ENCODE measurements at regions of chr10 and their contacts with region 1.

Region 1: DNA sequence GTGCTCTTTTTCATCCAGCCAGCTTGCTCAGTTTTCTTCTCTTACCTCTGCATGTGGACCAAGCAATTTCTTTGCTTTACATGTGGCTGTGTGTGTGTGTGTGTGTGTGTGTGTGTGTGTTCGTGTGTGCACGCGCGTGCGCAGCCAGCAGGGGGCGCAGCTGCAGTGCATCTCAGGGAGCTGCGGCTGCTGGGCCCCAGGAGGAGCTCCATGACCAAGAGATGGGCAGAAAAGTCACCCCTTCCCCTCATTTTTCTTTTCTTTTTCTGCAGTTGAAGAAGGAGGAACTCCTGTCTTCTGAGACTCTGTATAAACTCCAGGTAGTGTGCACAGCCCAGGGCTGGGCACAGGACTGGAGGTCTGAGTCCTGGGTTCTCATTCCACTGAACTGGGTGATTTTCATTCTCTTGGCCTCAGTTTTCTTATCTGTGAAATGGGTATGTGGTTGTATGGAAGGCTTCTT is 41.8 kb downstream of the BLNK start:
- DNase-seq: peak; percentile 61
- ATAC-seq: peak; percentile 89
- H3K4me3 ChIP-seq: no peak overlapping the region
- H3K27ac ChIP-seq: no peak overlapping the region
- H3K4me1 ChIP-seq: peaks cover 0 to 6% of the 10 kb centered on the region in 2 experiments; a peak in 1 of 4 replicates
- H3K27me3 ChIP-seq: no peaks in the 10 kb centered on the region
- CTCF ChIP-seq: peak; percentile 97 to 99 (median 98)
- POLR2A ChIP-seq: no peak
- RAD21 ChIP-seq: peak; percentile 90

Region 2: GRCh38 chr10:96038476-96039387 is 190.9 kb before region 1 on chr10:
- CTCF ChIA-PET with region 1: no interaction called
- POLR2A ChIA-PET with region 1: no interaction called
- RAD21 ChIA-PET with region 1: no interaction called
- intact Hi-C with region 1: no loop called
- DNase-seq: no peak
- ATAC-seq: no peak
- H3K4me3 ChIP-seq: no peak overlapping the region
- H3K27ac ChIP-seq: no peak overlapping the region
- H3K4me1 ChIP-seq: peaks cover 0 to 9% of the 10 kb centered on the region in 2 experiments; a peak in 3 of 4 replicates
- H3K27me3 ChIP-seq: no peaks in the 10 kb centered on the region
- CTCF ChIP-seq: no peak
- POLR2A ChIP-seq: no peak
- RAD21 ChIP-seq: no peak

Region 3: DNA sequence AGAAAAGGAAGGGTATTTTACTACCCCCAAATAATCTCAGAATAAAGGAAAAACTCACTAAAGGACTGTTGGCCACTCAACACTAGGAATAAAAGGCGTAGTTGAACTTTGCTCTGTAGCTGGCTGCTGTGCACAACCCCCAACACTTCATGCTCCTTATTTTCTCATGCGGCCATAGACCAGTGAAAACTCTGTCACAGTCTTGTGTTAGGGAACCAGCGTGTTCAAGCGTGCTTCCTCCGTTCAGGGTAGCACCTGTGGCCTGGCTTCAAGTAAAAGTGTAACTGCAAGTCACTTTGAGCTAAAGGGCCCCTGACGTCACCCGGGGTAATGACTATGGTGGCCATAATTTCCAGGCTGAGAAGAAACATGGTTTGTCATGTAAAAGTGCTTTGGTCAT is 14.8 kb after region 1 on chr10:
- CTCF ChIA-PET with region 1: interaction called, 18 read pairs
- POLR2A ChIA-PET with region 1: no interaction called
- RAD21 ChIA-PET with region 1: interaction called, 3 read pairs
- intact Hi-C with region 1: no loop called
- DNase-seq: no peak
- ATAC-seq: no peak
- H3K4me3 ChIP-seq: no peak overlapping the region
- H3K27ac ChIP-seq: no peak overlapping the region
- H3K4me1 ChIP-seq: no peaks in the 10 kb centered on the region
- H3K27me3 ChIP-seq: no peaks in the 10 kb centered on the region
- CTCF ChIP-seq: no peak
- POLR2A ChIP-seq: no peak
- RAD21 ChIP-seq: no peak

Region 4: DNA sequence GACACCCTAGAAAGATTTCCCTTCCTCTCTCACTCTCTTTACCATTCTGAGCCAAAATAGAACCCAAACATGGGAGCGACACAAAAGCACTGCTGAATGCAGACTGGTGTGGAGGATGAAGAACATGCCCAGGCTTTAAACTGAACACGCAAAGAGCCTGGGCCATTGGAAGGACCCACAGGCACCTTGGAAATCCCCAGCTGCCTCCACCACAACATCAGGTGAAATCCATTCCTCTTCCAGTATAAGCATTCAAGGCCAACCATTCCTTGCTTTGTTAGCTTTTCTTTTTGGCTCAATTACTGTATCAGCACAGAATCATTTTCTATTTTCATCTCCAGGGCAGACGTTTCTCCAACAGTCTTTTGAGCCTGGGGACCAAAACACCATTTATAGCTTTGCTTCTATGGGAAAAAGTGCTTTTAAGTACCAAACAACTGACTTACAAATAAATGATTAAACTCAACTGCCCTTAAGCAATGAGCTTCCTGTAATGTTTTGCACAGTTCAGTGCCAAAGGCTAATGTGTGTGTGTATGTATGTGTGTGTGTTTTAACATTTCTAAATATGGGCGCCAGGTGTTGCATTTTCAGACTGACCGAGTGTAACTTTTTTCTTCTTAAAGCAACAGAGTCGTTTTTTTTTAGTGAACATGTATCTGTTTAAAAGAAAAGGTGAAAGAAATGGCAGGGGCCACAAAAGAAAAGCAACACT is 58.0 kb after region 1 on chr10:
- CTCF ChIA-PET with region 1: interaction called, 70 read pairs
- POLR2A ChIA-PET with region 1: no interaction called
- RAD21 ChIA-PET with region 1: interaction called, 3 to 4 read pairs
- intact Hi-C with region 1: loop called (anchors 5 kb)
- DNase-seq: no peak
- ATAC-seq: peak; percentile 52; the same call in 1 of the 2 replicates
- H3K4me3 ChIP-seq: no peak overlapping the region
- H3K27ac ChIP-seq: no peak overlapping the region
- H3K4me1 ChIP-seq: peaks cover 4 to 9% of the 10 kb centered on the region in 2 experiments; a peak in 3 of 4 replicates
- H3K27me3 ChIP-seq: no peaks in the 10 kb centered on the region
- CTCF ChIP-seq: no peak
- POLR2A ChIP-seq: no peak
- RAD21 ChIP-seq: no peak

Region 5: DNA sequence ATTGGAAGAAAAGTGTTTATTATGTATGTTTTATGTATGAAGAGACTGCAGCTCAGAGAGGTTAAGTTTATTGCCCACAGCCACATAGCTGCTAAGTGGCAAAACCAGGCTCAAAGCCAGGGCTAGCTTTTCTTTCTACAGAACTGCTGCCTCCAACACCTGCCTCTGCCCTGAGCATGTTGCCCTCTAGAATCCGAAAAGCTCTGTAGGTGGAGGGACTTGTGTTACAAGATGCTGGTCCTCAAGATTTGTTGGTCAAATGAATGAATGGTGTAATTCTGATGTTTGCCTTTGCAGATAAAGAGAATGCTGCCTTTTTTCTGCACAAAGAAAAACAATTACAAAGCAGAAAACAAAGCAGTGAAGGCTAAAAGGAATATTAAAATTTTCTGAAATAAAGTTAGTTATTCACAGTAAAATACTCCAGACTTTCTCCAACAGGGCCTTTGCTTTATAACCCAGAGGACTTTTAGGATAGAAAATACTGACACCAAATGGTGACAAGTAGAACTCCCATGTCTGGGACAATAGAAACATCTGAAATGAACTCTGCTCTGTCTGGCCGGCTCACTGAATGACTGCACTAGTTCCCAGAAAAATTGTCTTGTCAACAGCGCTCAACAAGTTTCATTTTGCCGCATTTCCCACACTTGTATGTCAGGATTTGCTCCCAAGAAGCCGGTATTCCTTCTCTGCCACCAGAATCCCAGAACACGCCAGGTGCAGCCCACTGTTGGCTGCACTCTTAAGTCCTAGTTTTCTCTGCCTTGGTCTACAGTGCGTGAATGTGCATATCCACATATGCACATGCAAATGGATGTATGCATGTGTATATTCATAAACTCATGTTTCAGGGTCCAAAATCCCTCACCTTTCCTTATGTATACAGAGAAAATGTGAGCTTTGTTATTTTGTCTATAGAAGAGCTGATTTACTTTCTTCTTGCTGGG is 63.6 kb after region 1 on chr10:
- CTCF ChIA-PET with region 1: interaction called, 70 read pairs
- POLR2A ChIA-PET with region 1: no interaction called
- RAD21 ChIA-PET with region 1: interaction called in 1 of 2 experiments, 4 read pairs
- intact Hi-C with region 1: loop called (anchors 5 kb)
- DNase-seq: peak; percentile 47
- ATAC-seq: peak; percentile 95
- H3K4me3 ChIP-seq: no peak overlapping the region
- H3K27ac ChIP-seq: no peak overlapping the region
- H3K4me1 ChIP-seq: peaks cover 0 to under 1% of the 10 kb centered on the region in 2 experiments; a peak in 1 of 4 replicates
- H3K27me3 ChIP-seq: peaks cover 7% of the 10 kb centered on the region; the same call in 1 of the 2 replicates
- CTCF ChIP-seq: peak; percentile 50 to 92 (median 67)
- POLR2A ChIP-seq: no peak
- RAD21 ChIP-seq: peak; percentile 86

Region 6: DNA sequence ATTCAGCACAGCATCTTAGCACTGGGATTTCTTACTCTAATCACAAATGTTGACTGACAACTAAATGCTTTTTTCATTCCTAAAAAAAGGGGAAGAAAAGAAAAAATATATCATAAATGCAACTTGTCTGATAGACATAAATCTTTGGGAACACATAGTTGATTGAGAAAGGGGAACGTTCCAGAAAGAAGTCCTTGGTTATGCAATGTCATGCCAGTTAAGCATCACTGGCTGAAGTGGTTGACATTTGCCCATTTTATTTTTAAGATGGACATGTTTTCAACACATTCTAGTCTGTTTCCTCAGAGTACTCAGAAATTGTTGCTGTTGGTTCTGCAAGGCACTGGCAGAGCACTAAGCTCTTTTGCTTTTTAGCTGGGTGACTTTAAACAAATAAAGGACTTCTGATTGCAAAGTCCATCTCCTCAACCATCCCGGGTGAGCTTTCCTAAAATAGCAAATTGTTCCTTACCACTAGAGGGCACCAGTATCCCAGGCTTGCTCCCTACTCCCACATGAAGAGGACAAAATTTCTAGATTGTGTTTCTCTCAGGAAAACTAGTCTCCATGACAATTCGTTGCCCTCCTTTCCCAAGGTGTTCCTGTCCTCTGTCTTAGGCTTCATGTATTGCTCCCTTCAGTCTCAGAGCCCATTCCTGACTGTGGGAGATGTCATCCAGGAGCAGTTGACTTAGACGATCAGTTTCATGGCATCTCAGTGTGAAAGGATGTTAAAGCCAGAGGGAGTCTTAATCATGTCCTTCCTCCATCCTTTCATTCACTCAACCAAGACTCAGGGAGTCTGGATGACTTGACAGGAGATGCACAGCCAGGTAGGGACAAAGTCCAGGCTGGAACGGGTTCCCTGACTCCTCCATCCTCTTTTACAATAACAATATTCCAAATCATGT is 105.3 kb after region 1 on chr10:
- CTCF ChIA-PET with region 1: interaction called, 13 read pairs
- POLR2A ChIA-PET with region 1: no interaction called
- RAD21 ChIA-PET with region 1: interaction called in 1 of 2 experiments, 3 read pairs
- intact Hi-C with region 1: no loop called
- DNase-seq: peak; percentile 13
- ATAC-seq: peak; percentile 89
- H3K4me3 ChIP-seq: no peak overlapping the region
- H3K27ac ChIP-seq: no peak overlapping the region
- H3K4me1 ChIP-seq: no peaks in the 10 kb centered on the region
- H3K27me3 ChIP-seq: peaks cover 7% of the 10 kb centered on the region; the same call in 1 of the 2 replicates
- CTCF ChIP-seq: peak; percentile 66 to 88 (median 84); a peak in 5 of 6 replicates
- POLR2A ChIP-seq: no peak
- RAD21 ChIP-seq: peak; percentile 70